ENCODE measurements at regions of chr11 and their contacts with region 1.

Region 1: GRCh38 chr11:2002807-2003206 is 5.2 kb upstream of the H19 start:
- DNase-seq: no peak
- H3K4me3 ChIP-seq: no peak overlapping the region
- CTCF ChIP-seq: no peak

Region 2: GRCh38 chr11:1837171-1838076 is 165.4 kb before region 1 on chr11:
- CTCF ChIA-PET with region 1: interaction called, 54 read pairs
- POLR2A ChIA-PET with region 1: no interaction called
- DNase-seq: no peak
- H3K4me3 ChIP-seq: no peak overlapping the region
- CTCF ChIP-seq: peak; percentile 97

Region 3: GRCh38 chr11:1876361-1877063 is 126.3 kb before region 1 on chr11:
- CTCF ChIA-PET with region 1: interaction called, 29 read pairs
- POLR2A ChIA-PET with region 1: no interaction called
- DNase-seq: no peak
- H3K4me3 ChIP-seq: no peak overlapping the region
- CTCF ChIP-seq: peak; percentile 65

Region 4: DNA sequence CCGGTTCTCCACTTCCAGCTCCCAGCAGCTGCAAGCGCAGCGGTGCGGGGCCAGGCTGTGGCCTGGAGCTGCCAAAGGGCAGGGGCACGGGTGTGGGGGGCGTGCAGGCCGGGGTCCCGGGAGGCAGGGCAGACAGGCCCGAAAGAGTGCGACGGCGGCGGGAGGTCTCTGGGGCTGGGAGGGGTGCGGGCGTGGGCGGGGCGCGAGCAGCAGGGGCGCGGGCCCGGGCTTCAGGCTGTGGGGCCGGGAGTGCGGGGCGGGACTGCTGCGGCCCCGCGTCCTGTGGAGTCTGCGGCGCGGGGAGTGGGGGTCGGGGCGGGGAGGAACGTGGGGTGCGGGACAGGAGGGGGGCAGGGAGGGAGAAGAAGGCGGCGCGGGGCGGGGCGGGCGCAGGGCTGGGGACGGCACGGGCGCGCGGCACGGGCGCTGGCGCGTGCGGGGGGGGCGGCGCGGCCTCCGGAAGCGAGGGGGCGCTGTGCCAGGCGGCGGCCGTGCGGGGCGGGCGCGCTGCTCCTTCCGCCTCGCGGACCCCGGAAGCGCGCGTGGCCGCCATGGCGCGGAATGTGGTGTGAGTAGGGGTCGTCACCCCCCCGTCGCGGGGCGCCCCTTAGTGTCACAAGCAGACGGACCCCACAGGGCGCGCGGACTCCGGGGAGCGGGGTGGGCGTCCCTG is 55.9 kb before region 1 on chr11 and contains the start of gene MRPL23:
- CTCF ChIA-PET with region 1: interaction called, 31 read pairs
- POLR2A ChIA-PET with region 1: no interaction called
- DNase-seq: no peak
- H3K4me3 ChIP-seq: no peak within 1 kb of the TSS
- CTCF ChIP-seq: no peak

Region 5: DNA sequence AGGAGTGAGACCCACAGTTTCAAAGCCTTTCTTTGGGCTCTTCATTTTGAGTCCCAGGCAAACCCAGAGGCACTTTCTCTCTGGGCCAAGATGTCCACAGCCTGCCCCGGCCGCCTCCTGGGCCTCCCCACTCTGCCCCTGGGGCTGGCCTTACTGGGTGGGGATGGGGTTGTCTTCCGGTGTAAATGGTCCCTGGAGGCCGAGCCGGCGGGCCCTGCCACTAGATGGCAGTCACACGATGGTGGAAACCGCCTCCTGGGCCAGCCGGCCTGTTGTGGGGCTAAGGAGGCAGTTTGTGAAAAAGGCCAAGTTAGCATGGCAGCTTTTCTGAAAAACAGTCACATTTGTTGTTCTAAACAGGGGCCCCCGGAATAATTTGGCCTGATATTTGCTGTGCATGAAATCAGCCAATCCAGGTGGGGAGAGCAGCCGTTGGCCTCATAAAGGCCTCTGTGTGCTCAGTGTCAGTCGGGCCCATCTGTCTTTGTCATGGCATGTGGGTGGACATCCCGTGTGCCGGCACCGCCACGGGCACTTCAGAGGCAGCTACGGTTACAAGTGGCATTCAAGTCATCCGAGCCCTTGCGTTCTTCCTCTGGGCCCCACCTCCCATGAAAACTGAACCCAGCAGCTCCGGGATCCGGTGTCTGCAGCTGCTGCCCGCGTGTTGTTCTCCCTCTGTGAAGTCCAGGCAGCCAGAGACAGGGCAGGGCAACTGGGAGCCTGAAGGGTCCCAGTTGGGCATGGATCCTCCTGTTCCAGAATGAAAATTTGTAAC is 49.1 kb before region 1 on chr11:
- CTCF ChIA-PET with region 1: interaction called, 31 read pairs
- POLR2A ChIA-PET with region 1: no interaction called
- DNase-seq: no peak
- H3K4me3 ChIP-seq: no peak overlapping the region
- CTCF ChIP-seq: no peak

Measured in AG04449 (cell line).